ENCODE measurements at regions of chr18 and their contacts with region 1.

Region 1: GRCh38 chr18:44838971-44839666 is 158.4 kb downstream of the SETBP1 start:
- DNase-seq: peak; percentile 86
- H3K4me3 ChIP-seq: no peak overlapping the region
- H3K27ac ChIP-seq: peak overlapping the region; percentile 55
- H3K4me1 ChIP-seq: peaks cover 22% of the 10 kb centered on the region
- H3K27me3 ChIP-seq: no peaks in the 10 kb centered on the region
- CTCF ChIP-seq: no peak

Region 2: GRCh38 chr18:44895176-44895798 is 56.2 kb after region 1 on chr18:
- CTCF ChIA-PET with region 1: no interaction called
- POLR2A ChIA-PET with region 1: no interaction called
- intact Hi-C with region 1: loop called (anchors 2 kb)
- DNase-seq: peak; percentile 67
- H3K4me3 ChIP-seq: no peak overlapping the region
- H3K27ac ChIP-seq: no peak overlapping the region
- H3K4me1 ChIP-seq: peaks cover 21% of the 10 kb centered on the region
- H3K27me3 ChIP-seq: no peaks in the 10 kb centered on the region
- CTCF ChIP-seq: peak; percentile 52

Measured in A673 (cell line).